K562 (cell line): ENCODE measurements at regions of chr12 and their contacts with region 1.

Region 1: GRCh38 chr12:93677195-93678064 is at the start of gene CRADD:
- DNase-seq: peak; percentile 76 to 96 (median 79)
- ATAC-seq: peak; percentile 85
- H3K4me3 ChIP-seq: peak within 1 kb of the TSS; percentile 60
- H3K27ac ChIP-seq: peak within 1 kb of the TSS; percentile 95
- H3K4me1 ChIP-seq: peaks cover 15 to 37% of the 10 kb centered on the region in 2 experiments; a peak in 4 of 5 replicates
- H3K27me3 ChIP-seq: no peaks in the 10 kb centered on the region
- CTCF ChIP-seq: no peak
- EP300 ChIP-seq: peak; percentile 30; the same call in 1 of the 2 replicates
- POLR2A ChIP-seq: peak; percentile 90
- RAD21 ChIP-seq: no peak; a peak in 1 of 4 replicates
- polyA plus RNA-seq, gene CRADD: 20.5 to 24.9 TPM

Region 2: GRCh38 chr12:93146263-93146939 is 531.0 kb before region 1 on chr12:
- CTCF ChIA-PET with region 1: no interaction called
- POLR2A ChIA-PET with region 1: no interaction called
- in situ Hi-C with region 1: no loop called
- intact Hi-C with region 1: no loop called
- DNase-seq: peak in 1 of 4 experiments; percentile 25
- ATAC-seq: no peak; the same call in 2 of the 3 replicates
- H3K4me3 ChIP-seq: no peak overlapping the region
- H3K27ac ChIP-seq: no peak overlapping the region
- H3K4me1 ChIP-seq: peaks cover 0 to 9% of the 10 kb centered on the region in 2 experiments; a peak in 2 of 5 replicates
- H3K27me3 ChIP-seq: no peaks in the 10 kb centered on the region
- CTCF ChIP-seq: no peak
- EP300 ChIP-seq: no peak
- POLR2A ChIP-seq: no peak
- RAD21 ChIP-seq: no peak

Region 3: DNA sequence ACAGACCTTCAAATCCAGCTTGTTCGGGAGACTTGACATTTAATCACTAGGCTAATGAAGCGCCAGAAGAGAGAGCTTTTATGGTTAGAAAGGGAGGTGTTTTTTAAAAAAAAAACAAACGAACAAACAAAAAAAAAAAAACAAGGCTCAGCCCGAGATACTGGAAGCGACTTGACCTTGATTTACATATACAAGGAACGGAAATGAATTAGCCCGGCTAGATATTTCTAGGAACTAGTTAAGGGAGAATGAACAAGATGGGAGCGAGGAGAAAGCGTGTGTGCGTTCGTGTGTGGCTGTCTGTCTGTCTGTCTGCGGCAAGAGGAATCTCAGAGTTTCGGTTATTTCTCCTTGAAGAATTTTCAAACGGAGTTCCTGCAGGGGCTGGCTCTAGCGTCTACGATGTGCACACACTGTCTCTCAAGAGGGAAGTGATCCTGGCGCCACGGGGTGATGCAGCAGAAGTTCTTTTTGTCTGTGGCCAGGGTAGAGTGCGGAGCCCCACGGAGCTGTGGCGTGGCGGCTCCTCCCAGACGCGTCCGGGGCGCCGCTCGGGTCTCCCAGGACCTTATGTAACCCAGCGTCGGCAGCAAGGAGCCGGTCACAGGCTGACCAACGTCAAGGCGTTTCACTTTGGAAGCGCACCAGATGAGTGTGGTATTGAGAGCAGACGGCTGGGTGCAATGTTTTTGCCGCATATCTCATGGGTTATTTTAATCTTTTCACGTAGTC is 86.1 kb before region 1 on chr12:
- CTCF ChIA-PET with region 1: no interaction called
- POLR2A ChIA-PET with region 1: no interaction called
- in situ Hi-C with region 1: no loop called
- intact Hi-C with region 1: loop called (anchors 5 kb)
- DNase-seq: peak; percentile 54 to 85 (median 68)
- ATAC-seq: peak; percentile 84
- H3K4me3 ChIP-seq: peak overlapping the region; percentile 49
- H3K27ac ChIP-seq: peak overlapping the region; percentile 85
- H3K4me1 ChIP-seq: peaks cover 4 to 14% of the 10 kb centered on the region in 2 experiments
- H3K27me3 ChIP-seq: no peaks in the 10 kb centered on the region
- CTCF ChIP-seq: no peak
- EP300 ChIP-seq: peak; percentile 53
- POLR2A ChIP-seq: peak; percentile 88
- RAD21 ChIP-seq: peak in 1 of 2 experiments; percentile 28; a peak in 1 of 4 replicates

Region 4: GRCh38 chr12:93622485-93622884 is 54.9 kb before region 1 on chr12:
- CTCF ChIA-PET with region 1: no interaction called
- POLR2A ChIA-PET with region 1: no interaction called
- in situ Hi-C with region 1: no loop called
- intact Hi-C with region 1: no loop called
- DNase-seq: no peak
- ATAC-seq: no peak
- H3K4me3 ChIP-seq: no peak overlapping the region
- H3K27ac ChIP-seq: no peak overlapping the region
- H3K4me1 ChIP-seq: peaks cover 0 to 19% of the 10 kb centered on the region in 2 experiments; a peak in 2 of 5 replicates
- H3K27me3 ChIP-seq: no peaks in the 10 kb centered on the region
- CTCF ChIP-seq: no peak
- EP300 ChIP-seq: no peak
- POLR2A ChIP-seq: no peak
- RAD21 ChIP-seq: no peak

Region 5: DNA sequence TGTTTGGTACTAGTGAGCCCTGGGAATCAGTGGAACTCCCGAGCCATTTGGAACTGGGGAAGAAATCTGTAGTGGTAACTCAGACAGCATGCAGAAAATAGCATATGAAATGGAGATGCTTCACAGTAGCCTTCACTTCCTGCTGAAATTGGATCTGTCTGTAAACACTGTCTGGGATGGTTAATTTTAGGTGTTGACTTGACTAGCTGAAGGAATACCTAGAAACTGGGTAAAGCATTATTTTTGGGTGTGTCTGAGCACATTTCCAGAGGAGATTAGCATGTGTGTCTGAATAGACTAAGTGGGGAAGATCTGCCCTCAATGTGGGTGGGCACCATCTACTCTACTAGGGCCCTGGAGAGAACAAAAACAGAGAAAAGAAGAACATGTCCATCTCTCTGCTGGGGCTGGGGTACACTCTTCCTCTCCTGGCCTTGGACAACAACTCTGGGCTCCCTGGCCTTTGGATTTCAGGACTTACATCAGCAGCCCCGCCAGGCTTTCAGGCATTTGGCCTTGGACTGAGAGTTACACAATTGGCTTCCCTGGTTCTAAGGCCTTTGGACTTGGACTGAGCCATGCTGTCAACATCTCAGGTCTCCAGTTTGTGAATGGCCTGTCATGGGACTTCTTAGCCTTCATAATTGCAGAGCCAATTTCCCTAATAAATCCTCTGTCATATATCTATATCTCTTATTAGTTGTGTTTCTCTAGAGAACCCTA is 14.3 kb before region 1 on chr12:
- CTCF ChIA-PET with region 1: no interaction called
- POLR2A ChIA-PET with region 1: interaction called, 14 read pairs
- in situ Hi-C with region 1: no loop called
- intact Hi-C with region 1: no loop called
- DNase-seq: no peak
- ATAC-seq: peak; percentile 43
- H3K4me3 ChIP-seq: no peak overlapping the region
- H3K27ac ChIP-seq: no peak overlapping the region
- H3K4me1 ChIP-seq: peaks cover 0 to 19% of the 10 kb centered on the region in 2 experiments; a peak in 3 of 5 replicates
- H3K27me3 ChIP-seq: no peaks in the 10 kb centered on the region
- CTCF ChIP-seq: no peak
- EP300 ChIP-seq: no peak
- POLR2A ChIP-seq: no peak
- RAD21 ChIP-seq: no peak

Region 6: GRCh38 chr12:93759512-93760081 is 82.2 kb after region 1 on chr12:
- CTCF ChIA-PET with region 1: no interaction called
- POLR2A ChIA-PET with region 1: no interaction called
- in situ Hi-C with region 1: no loop called
- intact Hi-C with region 1: loop called (anchors 5 kb)
- DNase-seq: peak in 1 of 4 experiments; percentile 35
- ATAC-seq: no peak
- H3K4me3 ChIP-seq: no peak overlapping the region
- H3K27ac ChIP-seq: peak overlapping the region; percentile 84
- H3K4me1 ChIP-seq: peaks cover 24 to 81% of the 10 kb centered on the region in 2 experiments
- H3K27me3 ChIP-seq: no peaks in the 10 kb centered on the region
- CTCF ChIP-seq: no peak
- EP300 ChIP-seq: no peak
- POLR2A ChIP-seq: no peak
- RAD21 ChIP-seq: no peak